ENCODE measurements at regions of chr1 and their contacts with region 1.

Region 1: GRCh38 chr1:230066466-230067404 is at the start of gene GALNT2:
- DNase-seq: peak; percentile 86 to 91 (median 89)
- ATAC-seq: peak; percentile 96
- H3K4me3 ChIP-seq: peak within 1 kb of the TSS; percentile 59
- H3K4me3 Mint-ChIP-seq: peak within 1 kb of the TSS; percentile 88 to 97 (median 92)
- H3K27ac ChIP-seq: peak within 1 kb of the TSS; percentile 82
- H3K27ac Mint-ChIP-seq: peak within 1 kb of the TSS; percentile 88 to 97 (median 91)
- H3K4me1 ChIP-seq: no peaks in the 10 kb centered on the region
- H3K4me1 Mint-ChIP-seq: peaks cover 15 to 48% (median 38%) of the 10 kb centered on the region in 7 donors
- H3K27me3 ChIP-seq: no peaks in the 10 kb centered on the region
- H3K27me3 Mint-ChIP-seq: peaks cover 0 to 10% (median 0%) of the 10 kb centered on the region in 5 donors
- total RNA-seq, gene GALNT2: 18.7 to 32.7 (median 26.4) TPM

Region 2: DNA sequence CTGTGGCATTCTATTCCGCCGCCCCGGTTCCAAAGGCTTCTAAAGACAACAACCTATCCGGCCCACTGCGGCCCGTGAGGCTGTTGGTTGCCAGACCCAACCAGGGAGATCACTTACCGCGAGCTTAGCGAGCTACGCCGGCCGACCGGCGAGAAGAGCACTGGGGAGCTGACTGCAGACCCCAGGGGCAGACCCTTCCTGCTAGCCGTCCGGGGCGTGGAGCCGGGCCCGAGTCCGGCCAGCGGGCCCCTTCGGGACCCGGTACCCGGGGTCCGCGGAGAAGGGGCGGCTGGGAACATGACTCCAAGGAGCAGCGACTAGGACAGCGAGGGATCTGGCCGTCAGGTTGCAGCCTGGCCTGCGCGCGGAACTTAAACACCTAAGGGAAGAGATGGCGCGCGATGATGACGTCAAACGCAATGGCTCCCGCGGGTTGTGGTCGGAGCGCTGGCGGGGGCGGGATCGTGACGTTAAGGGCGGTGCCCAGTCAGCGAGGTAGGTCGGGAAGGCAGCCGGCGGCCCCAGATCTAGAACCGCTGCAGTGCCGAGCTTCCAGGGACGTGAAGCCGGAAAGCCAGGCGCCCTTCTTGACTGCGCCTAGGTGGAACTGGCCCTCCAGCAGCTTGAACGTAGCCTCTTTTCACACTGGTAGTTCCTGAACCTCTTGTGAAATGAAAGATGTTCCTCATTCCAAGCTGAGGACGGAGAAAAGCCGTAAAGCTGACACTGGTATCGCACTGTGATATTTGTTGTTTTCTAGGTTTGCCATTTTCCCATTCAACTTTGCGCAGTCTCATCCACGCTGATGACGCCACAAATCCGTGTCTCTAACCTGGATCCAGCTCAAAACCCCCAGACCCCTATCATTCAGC is 558.5 kb before region 1 on chr1 and contains the start of gene NUP133:
- CTCF ChIA-PET with region 1: no interaction called
- POLR2A ChIA-PET with region 1: interaction called, 4 read pairs
- intact Hi-C with region 1: loop called (anchors 1 to 5 kb)
- DNase-seq: peak; percentile 93 to 97 (median 97)
- ATAC-seq: peak; percentile 98
- H3K4me3 ChIP-seq: peak within 1 kb of the TSS; percentile 91
- H3K4me3 Mint-ChIP-seq: peak within 1 kb of the TSS; percentile 90 to 98 (median 92)
- H3K27ac ChIP-seq: peak within 1 kb of the TSS; percentile 95
- H3K27ac Mint-ChIP-seq: peak within 1 kb of the TSS; percentile 95 to 99 (median 99)
- H3K4me1 ChIP-seq: peaks cover 4 to 13% of the 10 kb centered on the region in 2 donors
- H3K4me1 Mint-ChIP-seq: peaks cover 10 to 47% (median 38%) of the 10 kb centered on the region in 7 donors
- H3K27me3 ChIP-seq: no peaks in the 10 kb centered on the region
- H3K27me3 Mint-ChIP-seq: peaks cover 0 to 5% (median 2%) of the 10 kb centered on the region in 5 donors
- total RNA-seq, gene NUP133: 24.3 to 45.8 (median 40.4) TPM

Region 3: DNA sequence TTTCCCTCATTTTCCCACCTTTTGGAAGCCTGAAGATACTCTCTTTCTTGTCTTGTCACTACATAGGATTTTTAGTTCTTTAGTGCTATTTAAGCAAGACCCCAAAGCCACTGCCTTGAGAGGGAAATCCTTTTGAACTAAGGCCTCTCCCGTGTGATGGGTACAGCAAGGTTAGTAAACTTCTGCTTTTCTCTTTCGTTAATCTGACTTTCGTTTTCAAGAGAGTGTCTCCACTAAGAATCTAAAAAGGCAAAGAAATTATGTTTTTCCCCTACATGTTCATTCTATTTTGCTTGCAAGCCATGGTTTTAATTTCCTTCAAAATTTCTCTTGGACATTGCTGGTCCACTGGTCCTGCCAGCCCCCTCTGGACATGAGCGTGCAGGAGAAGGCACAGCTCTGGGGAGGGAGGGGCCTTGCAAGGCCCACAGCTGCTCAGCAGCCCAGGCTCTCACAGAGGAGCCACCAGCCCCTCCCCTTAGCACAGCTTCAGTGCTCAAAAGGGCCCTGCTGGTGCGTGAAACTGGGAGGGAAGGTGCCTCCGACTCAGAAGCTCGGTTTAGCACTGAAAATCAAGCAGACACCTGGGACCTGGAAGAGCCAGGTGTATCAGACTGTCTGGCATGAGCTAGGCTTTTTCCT is 210.6 kb before region 1 on chr1:
- CTCF ChIA-PET with region 1: no interaction called
- POLR2A ChIA-PET with region 1: no interaction called
- intact Hi-C with region 1: loop called in 1 of 2 experiments (anchors 5 kb)
- DNase-seq: peak in 5 of 9 donors; percentile 8 to 45 (median 30)
- ATAC-seq: peak; percentile 81
- H3K4me3 ChIP-seq: peak overlapping the region; percentile 40
- H3K4me3 Mint-ChIP-seq: peak overlapping the region; percentile 82 to 92 (median 90)
- H3K27ac ChIP-seq: peak overlapping the region; percentile 28
- H3K27ac Mint-ChIP-seq: peak overlapping the region; percentile 23 to 95 (median 83)
- H3K4me1 ChIP-seq: no peaks in the 10 kb centered on the region
- H3K4me1 Mint-ChIP-seq: peaks cover 5 to 14% (median 10%) of the 10 kb centered on the region in 7 donors
- H3K27me3 ChIP-seq: no peaks in the 10 kb centered on the region
- H3K27me3 Mint-ChIP-seq: peaks cover 0 to 5% (median 0%) of the 10 kb centered on the region in 5 donors

Region 4: GRCh38 chr1:230091473-230092231 is 24.9 kb after region 1 on chr1:
- CTCF ChIA-PET with region 1: no interaction called
- POLR2A ChIA-PET with region 1: no interaction called
- intact Hi-C with region 1: no loop called
- DNase-seq: no peak
- ATAC-seq: no peak
- H3K4me3 ChIP-seq: no peak overlapping the region
- H3K4me3 Mint-ChIP-seq: no peak overlapping the region
- H3K27ac ChIP-seq: no peak overlapping the region
- H3K27ac Mint-ChIP-seq: peak overlapping the region in 1 of 9 donors; percentile 51
- H3K4me1 ChIP-seq: no peaks in the 10 kb centered on the region
- H3K4me1 Mint-ChIP-seq: peaks cover 18 to 52% (median 42%) of the 10 kb centered on the region in 7 donors
- H3K27me3 ChIP-seq: no peaks in the 10 kb centered on the region
- H3K27me3 Mint-ChIP-seq: no peaks in the 10 kb centered on the region

Region 5: GRCh38 chr1:230109895-230110667 is 43.3 kb after region 1 on chr1:
- CTCF ChIA-PET with region 1: no interaction called
- POLR2A ChIA-PET with region 1: no interaction called
- intact Hi-C with region 1: loop called (anchors 1 to 2 kb)
- DNase-seq: peak in 7 of 9 donors; percentile 25 to 72 (median 47)
- ATAC-seq: peak; percentile 73
- H3K4me3 ChIP-seq: no peak overlapping the region
- H3K4me3 Mint-ChIP-seq: peak overlapping the region in 6 of 10 donors; percentile 21 to 54 (median 39)
- H3K27ac ChIP-seq: no peak overlapping the region
- H3K27ac Mint-ChIP-seq: peak overlapping the region in 6 of 9 donors; percentile 34 to 84 (median 58)
- H3K4me1 ChIP-seq: peaks cover 0 to 4% of the 10 kb centered on the region in 2 donors
- H3K4me1 Mint-ChIP-seq: peaks cover 43 to 85% (median 68%) of the 10 kb centered on the region in 7 donors
- H3K27me3 ChIP-seq: no peaks in the 10 kb centered on the region
- H3K27me3 Mint-ChIP-seq: no peaks in the 10 kb centered on the region

Region 6: DNA sequence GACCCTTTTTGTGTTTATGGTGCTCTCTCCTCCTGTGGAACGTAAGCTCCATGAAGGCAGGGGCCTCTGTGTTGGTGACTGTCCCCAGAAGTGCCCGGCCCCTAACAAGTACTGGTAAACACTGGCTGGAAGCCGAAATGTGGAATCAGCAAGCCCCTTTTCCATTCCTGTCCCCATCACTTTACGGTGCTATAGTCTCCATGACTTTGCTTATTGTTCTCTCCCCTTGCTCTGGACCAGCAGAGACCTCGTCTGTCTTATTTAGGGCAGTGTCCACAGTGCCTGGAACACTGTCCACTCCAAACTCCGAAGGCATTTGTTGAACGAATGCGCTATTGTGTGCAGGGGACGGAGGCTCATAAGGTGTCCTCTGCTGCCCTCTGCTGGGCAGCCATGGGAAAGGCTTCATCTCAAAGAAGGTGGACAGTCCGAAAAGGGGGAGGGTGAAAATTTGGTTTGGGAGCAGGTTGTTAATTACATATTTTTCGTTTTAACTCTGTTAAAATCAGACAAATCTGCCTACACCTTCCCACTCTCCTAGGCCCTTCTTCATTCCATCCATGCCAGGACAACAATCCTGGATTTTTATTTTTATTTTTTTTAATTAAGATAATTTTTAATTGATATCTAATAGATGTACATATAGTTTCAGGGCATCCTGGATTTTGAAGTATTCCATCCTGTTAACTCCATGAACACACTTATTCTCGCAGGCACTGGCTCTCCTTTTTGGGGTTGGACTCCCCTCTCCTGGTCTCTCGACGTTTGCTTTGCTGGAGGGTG is 243.8 kb after region 1 on chr1:
- CTCF ChIA-PET with region 1: interaction called, 3 read pairs
- POLR2A ChIA-PET with region 1: no interaction called
- intact Hi-C with region 1: loop called in 1 of 2 experiments (anchors 5 kb)
- DNase-seq: peak; percentile 25 to 70 (median 54)
- ATAC-seq: peak; percentile 87
- H3K4me3 ChIP-seq: no peak overlapping the region
- H3K4me3 Mint-ChIP-seq: peak overlapping the region in 2 of 10 donors; percentile 6 to 30
- H3K27ac ChIP-seq: no peak overlapping the region
- H3K27ac Mint-ChIP-seq: no peak overlapping the region
- H3K4me1 ChIP-seq: peaks cover 3% of the 10 kb centered on the region in 2 donors
- H3K4me1 Mint-ChIP-seq: peaks cover 4 to 10% (median 4%) of the 10 kb centered on the region in 7 donors
- H3K27me3 ChIP-seq: no peaks in the 10 kb centered on the region
- H3K27me3 Mint-ChIP-seq: peaks cover 5 to 19% (median 10%) of the 10 kb centered on the region in 5 donors

Region 7: DNA sequence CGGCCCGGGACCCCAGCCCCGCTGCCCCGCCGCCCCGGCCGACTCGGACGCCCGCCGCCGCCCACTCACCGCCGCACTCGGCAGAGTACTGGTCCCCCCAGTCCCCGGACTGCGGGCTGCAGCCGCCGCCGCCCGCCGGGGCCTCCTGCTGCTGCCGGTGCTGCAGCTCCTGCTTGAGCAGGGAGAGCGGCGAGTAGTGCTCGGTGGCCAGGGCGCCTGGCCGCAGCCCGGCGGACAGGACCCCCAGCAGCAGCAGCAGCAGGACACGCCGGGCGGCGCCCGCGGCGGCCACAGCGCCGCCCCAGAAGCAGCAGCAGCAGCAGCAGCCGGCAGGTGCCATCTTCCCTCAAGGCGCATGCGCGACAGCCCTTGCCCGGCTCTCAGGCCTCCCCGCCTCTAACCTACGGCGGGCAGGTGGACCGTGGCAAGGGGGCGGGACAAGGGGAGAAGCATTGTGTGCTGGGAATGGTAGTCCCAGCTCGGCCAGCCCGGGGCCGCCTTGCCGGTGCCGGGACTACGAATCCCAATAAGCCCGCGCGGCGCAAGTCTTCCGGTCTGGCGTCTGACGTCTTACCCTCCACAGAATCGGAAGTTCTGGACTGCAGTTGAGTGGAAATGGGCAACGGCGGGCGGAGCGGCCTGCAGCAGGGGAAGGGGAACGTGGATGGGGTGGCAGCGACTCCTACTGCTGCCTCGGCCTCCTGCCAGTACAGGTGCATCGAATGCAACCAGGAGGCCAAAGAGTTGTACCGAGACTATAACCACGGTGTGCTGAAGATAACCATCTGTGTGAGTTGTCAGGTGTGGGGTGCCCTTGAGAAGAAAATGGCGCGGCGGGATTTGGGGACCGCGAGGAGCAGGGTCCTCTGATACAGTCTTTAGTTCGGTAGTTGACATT is 912.0 kb after region 1 on chr1 and contains the starts of genes ARV1 and TTC13:
- CTCF ChIA-PET with region 1: no interaction called
- POLR2A ChIA-PET with region 1: no interaction called
- intact Hi-C with region 1: loop called in 1 of 2 experiments (anchors 10 kb)
- DNase-seq: peak; percentile 83 to 98 (median 93)
- ATAC-seq: peak; percentile 97
- H3K4me3 ChIP-seq: peak within 1 kb of the TSS; percentile 71
- H3K4me3 Mint-ChIP-seq: peak within 1 kb of the TSS in 9 of 10 donors; percentile 83 to 100 (median 98)
- H3K27ac ChIP-seq: peak within 1 kb of the TSS; percentile 82
- H3K27ac Mint-ChIP-seq: peak within 1 kb of the TSS; percentile 92 to 99 (median 96)
- H3K4me1 ChIP-seq: peaks cover 34 to 39% of the 10 kb centered on the region in 2 donors
- H3K4me1 Mint-ChIP-seq: peaks cover 34 to 52% (median 43%) of the 10 kb centered on the region in 7 donors
- H3K27me3 ChIP-seq: no peaks in the 10 kb centered on the region
- H3K27me3 Mint-ChIP-seq: no peaks in the 10 kb centered on the region
- total RNA-seq, gene ARV1: 5.6 to 15.2 (median 11.5) TPM
- total RNA-seq, gene TTC13: 31.8 to 54.6 (median 45.1) TPM